Activated T-helper 1 cell treated with anti-CD3 and anti-CD28 coated beads, Interleukin-12 subunit alpha, Interleukin-12 subunit beta, Interleukin-2, Interleukin-4 antibody, amounts not matched to agents 30 ng/mL and 10 ng/mL and 1 ng/mL, durations not matched to agents 14 hours and 24 hours and 36 hours (primary cell): ENCODE measurements at regions of chr4 and their contacts with region 1.

Region 1: GRCh38 chr4:68175562-68176155 is 46.0 kb upstream of the TMPRSS11F start:
- DNase-seq: no peak
- H3K4me3 Mint-ChIP-seq: no peak overlapping the region
- H3K27ac Mint-ChIP-seq: no peak overlapping the region
- H3K4me1 Mint-ChIP-seq: no peaks in the 10 kb centered on the region
- H3K27me3 Mint-ChIP-seq: peaks cover 6% of the 10 kb centered on the region

Region 2: DNA sequence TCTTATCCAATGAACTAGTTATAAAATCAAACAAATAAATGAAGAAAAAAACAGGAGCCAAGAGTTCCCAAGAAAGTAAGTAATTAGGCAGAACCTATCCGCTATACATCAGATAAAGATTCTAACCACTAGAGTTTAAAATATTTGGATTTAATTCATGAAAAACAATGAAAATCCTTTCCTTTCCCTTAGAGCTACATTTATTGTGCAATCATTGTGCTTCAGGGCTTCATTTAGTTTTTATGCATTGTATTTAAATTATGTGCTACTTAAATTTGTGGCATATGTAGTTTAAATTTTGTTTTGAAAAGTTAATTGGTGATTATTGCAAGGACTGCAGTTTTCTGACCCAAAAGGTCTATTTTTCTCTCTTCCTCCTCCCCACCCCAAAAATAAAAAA is 439.4 kb before region 1 on chr4:
- intact Hi-C with region 1: no loop called
- DNase-seq: no peak
- H3K4me3 Mint-ChIP-seq: no peak overlapping the region
- H3K27ac Mint-ChIP-seq: no peak overlapping the region
- H3K4me1 Mint-ChIP-seq: no peaks in the 10 kb centered on the region
- H3K27me3 Mint-ChIP-seq: no peaks in the 10 kb centered on the region

Region 3: GRCh38 chr4:67746797-67747495 is 428.7 kb before region 1 on chr4:
- intact Hi-C with region 1: loop called (anchors 2 kb)
- DNase-seq: no peak
- H3K4me3 Mint-ChIP-seq: no peak overlapping the region
- H3K27ac Mint-ChIP-seq: no peak overlapping the region
- H3K4me1 Mint-ChIP-seq: peaks cover 13% of the 10 kb centered on the region
- H3K27me3 Mint-ChIP-seq: no peaks in the 10 kb centered on the region

Region 4: DNA sequence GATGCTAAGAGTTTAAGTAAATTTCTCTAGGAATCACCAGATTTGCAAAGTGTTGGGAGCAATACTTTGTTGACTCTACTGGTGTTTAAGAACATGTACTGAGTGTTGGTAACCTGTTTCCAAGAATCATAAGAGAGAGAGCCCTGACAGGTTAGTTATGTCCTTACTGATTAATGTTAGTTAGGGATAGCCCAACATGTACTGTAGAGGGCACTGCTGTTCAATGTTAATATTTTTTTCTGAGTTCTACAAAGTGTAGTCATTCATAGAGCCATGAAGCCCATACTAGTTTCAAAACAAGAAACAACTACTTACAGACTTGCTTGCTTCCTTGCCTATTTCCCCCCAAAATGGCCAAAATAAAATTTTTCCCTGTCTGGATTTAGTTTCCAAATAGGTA is 303.8 kb before region 1 on chr4:
- intact Hi-C with region 1: loop called (anchors 1 kb)
- DNase-seq: no peak
- H3K4me3 Mint-ChIP-seq: no peak overlapping the region
- H3K27ac Mint-ChIP-seq: no peak overlapping the region
- H3K4me1 Mint-ChIP-seq: no peaks in the 10 kb centered on the region
- H3K27me3 Mint-ChIP-seq: peaks cover 3% of the 10 kb centered on the region

Region 5: GRCh38 chr4:67909905-67910584 is 265.6 kb before region 1 on chr4:
- intact Hi-C with region 1: loop called (anchors 10 kb)
- DNase-seq: no peak
- H3K4me3 Mint-ChIP-seq: no peak overlapping the region
- H3K27ac Mint-ChIP-seq: no peak overlapping the region
- H3K4me1 Mint-ChIP-seq: no peaks in the 10 kb centered on the region
- H3K27me3 Mint-ChIP-seq: peaks cover 12% of the 10 kb centered on the region

Region 6: GRCh38 chr4:67988991-67989390 is 186.7 kb before region 1 on chr4:
- intact Hi-C with region 1: loop called (anchors 1 kb)
- DNase-seq: no peak
- H3K4me3 Mint-ChIP-seq: no peak overlapping the region
- H3K27ac Mint-ChIP-seq: no peak overlapping the region
- H3K4me1 Mint-ChIP-seq: peaks cover 6% of the 10 kb centered on the region
- H3K27me3 Mint-ChIP-seq: peaks cover 3% of the 10 kb centered on the region

Region 7: DNA sequence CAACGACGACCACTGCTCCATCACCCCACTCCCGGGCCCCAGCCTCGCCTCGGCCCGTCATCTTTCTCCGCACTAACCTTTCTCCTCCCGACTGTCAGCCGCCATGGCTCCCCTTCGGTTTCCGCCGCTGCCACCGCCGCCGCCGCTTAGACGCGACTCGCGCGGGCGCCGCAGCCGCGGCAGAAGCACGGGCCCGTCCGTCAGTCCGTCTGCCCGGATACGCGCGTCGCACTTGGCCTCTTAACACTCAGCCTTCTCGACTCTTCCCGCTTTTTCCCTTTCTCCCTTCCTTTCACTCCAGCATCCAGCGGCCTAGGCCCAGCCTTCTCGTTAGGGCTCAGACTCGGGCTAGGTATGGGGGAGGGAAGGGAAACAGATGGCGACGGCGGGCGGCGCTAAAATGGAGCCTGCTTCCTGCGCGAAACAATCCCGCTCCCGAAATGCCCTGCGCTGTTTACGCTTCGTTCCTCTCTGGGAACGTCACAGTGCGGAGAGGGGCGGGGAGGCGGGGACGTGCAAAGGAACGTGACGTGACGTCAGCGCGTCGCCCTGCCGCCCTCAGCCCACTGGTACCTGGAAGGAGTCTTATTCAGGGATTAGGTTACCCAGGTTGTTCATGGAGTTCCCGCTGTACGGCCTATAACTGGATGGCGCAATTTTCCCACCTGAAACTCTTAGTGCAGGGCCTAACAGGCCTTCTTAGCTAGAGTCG is 174.1 kb after region 1 on chr4 and contains the start of gene YTHDC1:
- intact Hi-C with region 1: no loop called
- DNase-seq: peak; percentile 90
- H3K4me3 Mint-ChIP-seq: peak within 1 kb of the TSS; percentile 91
- H3K27ac Mint-ChIP-seq: peak within 1 kb of the TSS; percentile 96
- H3K4me1 Mint-ChIP-seq: peaks cover 36% of the 10 kb centered on the region
- H3K27me3 Mint-ChIP-seq: peaks cover 12% of the 10 kb centered on the region
- total RNA-seq, gene YTHDC1: 75.6 and 82.3 TPM in 2 replicates

Region 8: DNA sequence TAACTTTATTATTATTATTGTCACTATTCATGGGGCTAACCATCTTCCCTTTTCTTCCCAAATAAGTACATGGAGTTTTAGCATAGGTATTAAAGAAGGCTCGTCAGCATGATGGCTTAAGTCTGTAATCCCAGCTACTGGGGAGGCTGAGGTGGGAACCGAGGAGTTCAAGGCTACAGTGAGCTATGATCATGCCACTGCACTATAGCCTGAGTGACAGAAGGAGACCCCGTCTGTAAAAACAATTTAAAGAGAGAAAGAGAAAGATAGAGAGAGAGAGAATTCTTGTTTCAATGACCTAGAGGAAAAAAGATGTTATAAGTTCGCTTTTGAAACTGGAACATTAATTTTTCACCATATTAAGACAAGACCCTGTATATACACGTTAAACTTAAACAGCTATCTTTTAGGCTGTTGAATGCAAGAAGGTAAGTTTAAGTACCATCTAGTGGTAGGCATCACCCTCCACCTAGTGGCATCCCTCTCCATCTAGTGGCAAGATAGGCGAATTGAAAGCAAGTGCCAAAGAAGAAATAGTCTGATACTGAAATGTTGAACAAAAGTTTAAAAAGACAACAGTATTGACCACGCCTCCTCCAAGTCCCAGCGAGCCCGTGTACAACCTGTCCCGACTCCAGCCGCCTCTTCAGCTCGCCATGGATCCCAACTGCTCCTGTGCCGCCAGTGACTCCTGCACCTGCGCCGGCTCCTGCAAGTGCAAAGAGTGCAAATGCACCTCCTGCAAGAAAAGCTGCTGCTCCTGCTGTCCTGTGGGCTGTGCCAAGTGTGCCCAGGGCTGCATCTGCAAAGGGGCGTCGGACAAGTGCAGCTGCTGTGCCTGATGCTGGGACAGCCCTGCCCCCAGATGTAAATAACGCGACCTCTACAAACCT is 200.3 kb after region 1 on chr4:
- intact Hi-C with region 1: loop called (anchors 10 kb)
- DNase-seq: peak; percentile 38
- H3K4me3 Mint-ChIP-seq: peak overlapping the region; percentile 65
- H3K27ac Mint-ChIP-seq: no peak overlapping the region
- H3K4me1 Mint-ChIP-seq: peaks cover 23% of the 10 kb centered on the region
- H3K27me3 Mint-ChIP-seq: peaks cover 30% of the 10 kb centered on the region